ENCODE measurements at regions of chr4 and their contacts with region 1.

Region 1: GRCh38 chr4:108030332-108030731 is 40.6 kb downstream of the HADH start:
- DNase-seq: peak; percentile 86
- H3K4me3 Mint-ChIP-seq: no peak overlapping the region
- H3K27ac Mint-ChIP-seq: peak overlapping the region; percentile 83
- H3K4me1 Mint-ChIP-seq: peaks cover 77% of the 10 kb centered on the region
- H3K27me3 Mint-ChIP-seq: no peaks in the 10 kb centered on the region

Region 2: DNA sequence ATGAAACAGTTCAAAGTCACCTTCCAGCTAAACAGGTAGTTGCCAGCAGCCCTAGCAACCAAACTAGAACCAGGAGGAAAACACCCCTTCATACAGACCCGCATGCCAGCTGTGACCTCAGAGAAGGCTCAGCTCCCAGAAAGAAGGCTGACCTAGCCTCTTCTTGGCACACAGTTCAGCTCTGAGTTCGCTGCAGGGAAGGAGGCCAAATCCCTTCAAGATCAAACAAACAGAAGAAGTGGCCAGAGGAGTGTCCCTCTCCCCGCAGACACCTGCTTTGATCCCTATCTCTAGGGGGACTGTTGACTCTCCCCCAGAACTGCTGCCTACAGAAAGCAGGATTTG is 15.3 kb after region 1 on chr4:
- CTCF ChIA-PET with region 1: interaction called, 26 read pairs
- DNase-seq: no peak
- H3K4me3 Mint-ChIP-seq: no peak overlapping the region
- H3K27ac Mint-ChIP-seq: peak overlapping the region; percentile 66
- H3K4me1 Mint-ChIP-seq: peaks cover 62% of the 10 kb centered on the region
- H3K27me3 Mint-ChIP-seq: no peaks in the 10 kb centered on the region

Region 3: GRCh38 chr4:108060164-108060563 is 29.8 kb after region 1 on chr4:
- CTCF ChIA-PET with region 1: interaction called, 25 read pairs
- DNase-seq: no peak
- H3K4me3 Mint-ChIP-seq: no peak overlapping the region
- H3K27ac Mint-ChIP-seq: peak overlapping the region; percentile 72
- H3K4me1 Mint-ChIP-seq: peaks cover 76% of the 10 kb centered on the region
- H3K27me3 Mint-ChIP-seq: no peaks in the 10 kb centered on the region

Region 4: DNA sequence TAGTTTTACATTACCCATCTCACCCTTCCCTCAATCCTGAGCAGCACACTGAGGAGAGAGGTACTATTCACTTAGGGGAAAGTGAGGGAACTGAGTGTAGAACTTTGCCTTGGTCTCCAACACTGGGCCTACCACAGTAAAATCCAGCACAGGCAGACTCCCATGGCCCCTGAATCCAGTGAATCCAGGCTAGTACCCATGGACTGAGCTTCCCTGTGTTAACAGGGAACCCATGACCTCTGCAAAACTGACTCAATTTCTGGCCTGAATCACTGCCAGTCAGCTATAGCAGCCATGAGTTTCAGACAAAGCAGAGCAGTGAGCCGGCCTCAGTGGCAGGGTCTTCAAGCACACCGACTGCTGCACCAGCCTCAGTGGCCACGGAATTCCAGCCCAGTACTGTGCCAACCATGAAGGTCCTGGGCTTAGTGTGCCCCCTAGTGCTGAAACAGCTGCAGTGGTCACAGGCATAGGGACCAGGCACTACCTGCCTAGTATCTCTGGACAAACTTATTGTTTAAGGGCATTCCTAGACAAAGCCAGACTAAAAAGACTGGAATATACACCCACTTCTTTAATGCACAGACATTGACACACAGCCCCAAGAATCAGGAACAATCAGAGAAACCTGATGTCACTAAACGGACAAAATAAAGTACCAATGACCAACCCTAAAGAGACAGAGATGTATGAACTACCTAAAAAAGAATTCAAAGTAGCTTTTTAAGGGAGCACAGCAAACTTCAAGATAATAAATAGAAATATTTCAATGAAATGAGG is 462.7 kb after region 1 on chr4:
- CTCF ChIA-PET with region 1: interaction called, 27 read pairs
- DNase-seq: peak; percentile 47
- H3K4me3 Mint-ChIP-seq: no peak overlapping the region
- H3K27ac Mint-ChIP-seq: no peak overlapping the region
- H3K4me1 Mint-ChIP-seq: peaks cover 20% of the 10 kb centered on the region
- H3K27me3 Mint-ChIP-seq: no peaks in the 10 kb centered on the region

Region 5: DNA sequence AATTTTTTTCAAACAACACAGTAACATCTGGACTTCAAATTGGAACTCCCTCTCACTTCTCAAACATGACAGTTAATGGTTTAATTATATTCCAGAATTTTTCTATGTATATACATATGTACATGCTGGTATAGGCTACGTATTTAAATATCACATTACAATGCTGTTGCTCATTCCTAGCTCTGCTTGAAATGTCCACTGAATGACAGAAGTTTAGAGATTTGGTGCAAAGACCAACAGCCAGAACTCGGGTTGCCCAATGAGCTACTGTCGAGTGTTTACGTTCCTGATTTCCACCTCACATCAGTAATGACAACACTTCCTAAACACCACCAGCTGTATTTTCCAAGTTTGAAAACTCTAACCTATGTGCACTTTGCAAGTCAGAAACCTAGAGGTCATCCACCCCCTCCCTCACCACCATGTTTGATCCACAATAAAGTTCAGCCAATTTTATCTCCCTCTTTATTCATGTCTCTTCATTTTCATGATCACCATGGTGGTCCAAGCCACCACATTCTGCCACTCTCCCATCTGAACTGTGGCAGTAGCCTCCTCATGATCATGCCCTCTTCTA is 540.7 kb after region 1 on chr4:
- CTCF ChIA-PET with region 1: interaction called, 55 read pairs
- DNase-seq: no peak
- H3K4me3 Mint-ChIP-seq: no peak overlapping the region
- H3K27ac Mint-ChIP-seq: no peak overlapping the region
- H3K4me1 Mint-ChIP-seq: peaks cover 23% of the 10 kb centered on the region
- H3K27me3 Mint-ChIP-seq: peaks cover 4% of the 10 kb centered on the region